Activated B cell treated with CpG ODN at 0.5 μM for 24 hours (primary cell): ENCODE measurements at regions of chr1 and their contacts with region 1.

Region 1: GRCh38 chr1:117059678-117060440 is at the start of gene TTF2:
- DNase-seq: peak; percentile 80
- ATAC-seq: peak; percentile 97
- H3K4me3 Mint-ChIP-seq: no peak within 1 kb of the TSS
- H3K27ac Mint-ChIP-seq: no peak within 1 kb of the TSS
- H3K4me1 Mint-ChIP-seq: peaks cover 26% of the 10 kb centered on the region
- H3K27me3 Mint-ChIP-seq: no peaks in the 10 kb centered on the region
- CTCF ChIP-seq: no peak
- total RNA-seq, gene TTF2: 33.4 and 37.7 TPM in 2 replicates

Region 2: DNA sequence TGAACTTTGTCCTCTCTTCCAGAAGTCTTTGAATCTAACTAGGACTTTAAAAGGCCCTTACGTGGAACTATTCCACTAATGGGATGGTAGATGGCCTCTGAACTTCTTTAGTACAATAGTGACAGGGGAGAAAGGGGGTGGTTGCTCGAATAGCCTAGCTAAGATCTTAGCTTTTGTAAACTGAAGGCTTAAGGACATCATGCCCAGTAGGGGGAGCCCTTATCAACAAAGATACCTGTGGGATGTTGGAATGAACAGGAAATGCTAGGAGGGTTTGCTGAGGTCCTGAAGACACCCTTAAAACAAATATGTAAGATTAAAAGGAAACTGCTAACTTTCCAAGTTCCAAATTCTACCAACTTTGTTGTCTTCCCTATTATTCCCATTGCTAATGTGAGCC is 1252.1 kb before region 1 on chr1:
- CTCF ChIA-PET with region 1: no interaction called
- POLR2A ChIA-PET with region 1: no interaction called
- intact Hi-C with region 1: loop called (anchors 10 kb)
- DNase-seq: no peak
- ATAC-seq: peak; percentile 28
- H3K4me3 Mint-ChIP-seq: no peak overlapping the region
- H3K27ac Mint-ChIP-seq: no peak overlapping the region
- H3K4me1 Mint-ChIP-seq: no peaks in the 10 kb centered on the region
- H3K27me3 Mint-ChIP-seq: peaks cover 9% of the 10 kb centered on the region
- CTCF ChIP-seq: no peak

Region 3: DNA sequence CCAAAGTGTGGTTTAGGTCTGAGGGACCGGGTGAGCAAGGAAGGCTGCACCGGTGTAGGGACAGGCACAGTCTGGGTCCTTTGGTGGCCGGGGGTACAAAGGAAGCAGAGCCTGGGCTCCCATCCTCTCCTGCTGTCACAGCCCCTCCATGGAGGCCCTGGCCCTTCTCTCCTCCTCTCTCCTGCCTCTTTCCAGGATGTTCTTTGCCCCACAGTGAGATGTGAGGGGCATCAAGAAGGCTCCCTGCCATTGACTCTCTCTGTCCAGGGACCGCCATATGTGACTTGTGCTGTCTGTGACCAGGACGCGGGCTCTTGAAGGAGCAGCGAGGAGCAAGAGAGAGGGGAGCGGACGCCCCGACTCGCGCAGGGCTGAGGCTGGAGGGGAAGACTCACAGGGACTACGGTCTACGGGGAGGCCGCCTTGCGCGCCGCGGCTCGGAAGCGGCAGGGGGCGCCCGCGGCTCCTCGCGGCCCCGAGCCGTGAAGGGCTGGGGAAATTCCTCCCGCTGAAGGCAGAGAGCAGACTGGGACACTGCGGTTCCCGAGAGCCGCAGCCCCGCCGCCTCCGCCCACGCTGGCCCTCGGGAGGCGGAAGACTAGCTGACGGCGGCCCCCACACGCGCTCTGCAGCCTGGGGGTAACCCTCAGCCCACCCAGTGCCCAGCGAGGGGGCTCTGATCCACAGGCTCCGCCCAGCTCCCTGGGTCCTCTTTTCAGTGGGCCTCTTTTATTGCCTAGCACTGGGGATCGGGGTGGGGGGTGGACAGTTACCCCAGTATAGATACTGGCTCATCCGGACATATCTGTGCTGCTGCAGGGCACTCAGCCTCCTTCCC is 907.9 kb before region 1 on chr1:
- CTCF ChIA-PET with region 1: no interaction called
- POLR2A ChIA-PET with region 1: no interaction called
- intact Hi-C with region 1: loop called (anchors 5 kb)
- DNase-seq: peak; percentile 76
- ATAC-seq: peak; percentile 98
- H3K4me3 Mint-ChIP-seq: peak overlapping the region; percentile 66
- H3K27ac Mint-ChIP-seq: peak overlapping the region; percentile 19
- H3K4me1 Mint-ChIP-seq: peaks cover 3% of the 10 kb centered on the region
- H3K27me3 Mint-ChIP-seq: peaks cover 4% of the 10 kb centered on the region
- CTCF ChIP-seq: peak; percentile 38

Region 4: DNA sequence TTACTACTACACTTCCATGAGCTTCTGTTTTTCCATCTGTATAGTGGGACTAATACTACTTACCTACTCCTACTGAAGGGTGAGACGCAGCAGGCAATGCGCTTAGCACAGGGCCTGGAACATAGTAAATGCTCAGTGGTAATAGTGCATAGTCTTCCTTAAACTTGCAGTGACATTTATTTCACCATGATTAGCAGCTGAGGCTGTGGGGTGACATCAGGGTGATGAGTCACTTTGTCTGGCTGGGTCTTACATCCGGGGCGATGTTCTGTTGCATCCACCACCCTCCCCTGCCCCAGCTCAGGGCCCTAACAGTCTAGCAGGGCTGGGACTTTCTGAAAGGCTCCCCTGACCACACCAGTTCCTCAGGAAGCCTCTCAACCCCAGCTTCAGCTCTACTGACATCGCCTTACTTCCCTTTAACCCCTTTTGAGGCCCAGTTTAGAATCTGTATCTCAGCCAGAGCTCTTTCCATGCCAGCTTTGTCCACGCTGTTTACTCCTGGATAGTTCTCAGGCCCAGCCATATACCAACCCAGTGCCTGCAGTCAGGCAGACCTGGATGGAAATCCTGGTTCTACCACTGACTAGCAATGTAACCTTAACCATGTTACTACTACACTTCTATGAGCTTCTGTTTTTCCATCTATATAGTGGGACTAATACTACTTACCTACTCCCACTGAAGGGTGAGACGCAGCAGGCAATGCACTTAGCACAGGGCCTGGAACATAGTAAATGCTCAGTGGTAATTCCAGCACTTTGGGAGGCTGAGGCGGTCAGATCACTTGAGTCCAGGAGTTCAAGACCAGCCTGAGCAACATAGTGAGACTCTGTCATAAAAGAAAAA is 555.3 kb before region 1 on chr1:
- CTCF ChIA-PET with region 1: no interaction called
- POLR2A ChIA-PET with region 1: interaction called, 3 read pairs
- intact Hi-C with region 1: loop called (anchors 2 kb)
- DNase-seq: peak; percentile 64
- ATAC-seq: peak; percentile 95
- H3K4me3 Mint-ChIP-seq: peak overlapping the region; percentile 53
- H3K27ac Mint-ChIP-seq: peak overlapping the region; percentile 83
- H3K4me1 Mint-ChIP-seq: peaks cover 63% of the 10 kb centered on the region
- H3K27me3 Mint-ChIP-seq: no peaks in the 10 kb centered on the region
- CTCF ChIP-seq: no peak

Region 5: DNA sequence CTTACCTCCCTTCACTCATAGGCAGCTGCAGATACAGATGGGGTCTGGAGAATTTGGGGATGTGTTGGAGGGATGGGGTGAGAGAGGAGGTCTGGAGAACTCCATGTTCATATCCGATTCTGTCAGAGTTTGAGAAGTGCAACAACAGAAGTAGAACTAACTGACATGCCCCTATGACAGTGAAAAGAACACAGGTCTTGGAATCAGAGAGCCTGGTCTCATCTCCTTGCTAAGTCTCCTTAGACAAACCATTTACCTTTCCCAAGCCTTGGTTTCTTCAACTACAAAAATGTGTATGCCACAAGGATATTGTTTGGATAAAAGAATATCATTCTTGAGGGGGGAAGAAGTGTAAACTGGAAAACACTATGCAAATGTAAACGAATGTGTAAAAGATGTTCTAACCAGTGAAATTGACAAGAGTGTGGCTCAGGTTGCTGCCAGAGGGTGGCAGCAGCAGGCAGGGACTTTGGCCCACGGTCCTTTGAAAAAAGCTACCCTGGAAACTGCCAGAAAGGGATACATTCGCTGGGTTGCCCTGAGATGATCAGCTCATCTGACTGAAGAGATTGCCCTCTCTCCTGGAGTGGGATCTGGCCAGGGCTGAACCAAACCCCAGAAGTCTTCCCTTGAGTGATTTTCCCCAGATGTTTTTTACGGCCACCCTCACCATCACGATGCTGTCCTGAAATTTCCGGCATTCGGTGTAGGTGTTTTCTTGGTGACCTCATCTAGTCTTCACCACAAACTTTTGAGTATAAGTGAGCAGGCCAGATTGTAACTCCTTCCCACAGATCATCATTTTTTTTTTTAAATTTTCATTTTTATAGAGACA is 322.6 kb before region 1 on chr1:
- CTCF ChIA-PET with region 1: interaction called, 36 read pairs
- POLR2A ChIA-PET with region 1: interaction called, 9 read pairs
- intact Hi-C with region 1: loop called (anchors 1 kb)
- DNase-seq: peak; percentile 34
- ATAC-seq: peak; percentile 70
- H3K4me3 Mint-ChIP-seq: peak overlapping the region; percentile 45
- H3K27ac Mint-ChIP-seq: peak overlapping the region; percentile 4
- H3K4me1 Mint-ChIP-seq: peaks cover 25% of the 10 kb centered on the region
- H3K27me3 Mint-ChIP-seq: no peaks in the 10 kb centered on the region
- CTCF ChIP-seq: peak; percentile 45

Region 6: DNA sequence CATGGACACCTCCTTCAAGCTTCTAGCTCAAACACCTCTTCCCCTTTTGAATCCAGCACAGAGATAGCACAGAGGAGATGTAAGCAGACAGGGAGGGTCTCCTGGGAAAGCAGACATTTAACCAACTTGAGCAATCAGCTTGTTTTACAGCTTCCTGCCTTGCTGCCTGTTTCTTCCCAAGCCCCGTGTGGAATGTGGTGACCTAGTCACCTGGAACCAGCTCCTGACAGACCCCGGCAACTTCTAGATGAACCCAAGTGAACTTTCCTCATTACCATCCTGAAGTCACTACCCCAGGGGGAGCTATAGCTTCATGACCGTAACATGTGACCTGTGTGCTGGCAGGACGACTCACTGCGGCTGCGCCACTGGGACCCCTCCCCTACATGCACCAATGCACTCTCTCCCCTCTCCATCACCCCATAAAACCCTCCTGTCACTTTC is 23.8 kb before region 1 on chr1:
- CTCF ChIA-PET with region 1: no interaction called
- POLR2A ChIA-PET with region 1: no interaction called
- intact Hi-C with region 1: no loop called
- DNase-seq: no peak
- ATAC-seq: no peak
- H3K4me3 Mint-ChIP-seq: no peak overlapping the region
- H3K27ac Mint-ChIP-seq: no peak overlapping the region
- H3K4me1 Mint-ChIP-seq: no peaks in the 10 kb centered on the region
- H3K27me3 Mint-ChIP-seq: no peaks in the 10 kb centered on the region
- CTCF ChIP-seq: no peak

Region 7: GRCh38 chr1:117367047-117368018 is 307.5 kb after region 1 on chr1 and contains the start of gene MAN1A2:
- CTCF ChIA-PET with region 1: no interaction called
- POLR2A ChIA-PET with region 1: interaction called, 5 read pairs
- intact Hi-C with region 1: loop called (anchors 1 kb)
- DNase-seq: peak; percentile 82
- ATAC-seq: peak; percentile 72
- H3K4me3 Mint-ChIP-seq: peak within 1 kb of the TSS; percentile 95
- H3K27ac Mint-ChIP-seq: peak within 1 kb of the TSS; percentile 91
- H3K4me1 Mint-ChIP-seq: peaks cover 68% of the 10 kb centered on the region
- H3K27me3 Mint-ChIP-seq: no peaks in the 10 kb centered on the region
- CTCF ChIP-seq: no peak
- total RNA-seq, gene MAN1A2: 43.3 and 46.0 TPM in 2 replicates

Region 8: DNA sequence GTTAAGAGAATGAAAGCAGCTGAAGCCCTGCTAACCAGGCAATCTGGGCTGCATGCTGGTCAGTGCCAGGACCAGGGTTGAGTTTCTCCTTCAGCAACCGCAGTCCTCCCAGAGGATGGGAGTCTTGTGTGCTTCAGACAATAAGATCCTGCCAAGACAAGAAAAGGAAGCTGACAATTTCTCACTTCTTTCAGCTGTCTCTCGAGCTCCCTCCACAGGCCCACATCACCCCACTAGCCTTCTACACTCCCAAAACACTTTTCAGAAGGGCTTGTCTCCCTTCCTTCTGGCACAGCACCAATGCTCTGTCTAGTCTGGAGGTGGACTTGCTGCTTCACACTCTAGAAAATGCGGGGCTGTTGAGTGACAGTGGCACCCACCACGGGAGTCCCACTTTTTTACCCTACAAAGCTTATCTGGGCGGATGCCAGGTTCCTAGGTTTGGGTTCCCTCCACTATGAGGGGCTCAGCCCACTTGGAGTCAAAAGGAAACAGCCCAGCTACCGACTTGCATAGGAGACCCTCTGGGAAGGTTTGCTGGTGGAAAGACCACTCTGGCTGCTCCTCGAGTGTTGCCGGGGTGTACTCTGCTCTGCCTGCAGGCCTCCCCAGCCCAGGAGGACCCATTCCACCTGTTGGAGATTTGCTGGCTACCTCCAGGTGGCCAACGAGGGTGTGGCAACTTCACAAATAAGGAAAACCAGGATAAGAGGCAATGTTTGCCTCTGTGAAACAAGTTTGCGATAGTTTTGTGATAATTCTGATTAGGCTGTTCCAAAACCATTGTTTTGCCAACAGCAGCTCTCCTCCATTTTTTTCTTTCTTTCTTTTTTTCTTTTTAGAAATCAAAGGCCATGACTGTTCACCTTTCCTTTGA is 614.9 kb after region 1 on chr1:
- CTCF ChIA-PET with region 1: no interaction called
- POLR2A ChIA-PET with region 1: no interaction called
- intact Hi-C with region 1: loop called (anchors 5 kb)
- DNase-seq: peak; percentile 41
- ATAC-seq: peak; percentile 80
- H3K4me3 Mint-ChIP-seq: no peak overlapping the region
- H3K27ac Mint-ChIP-seq: no peak overlapping the region
- H3K4me1 Mint-ChIP-seq: peaks cover 56% of the 10 kb centered on the region
- H3K27me3 Mint-ChIP-seq: no peaks in the 10 kb centered on the region
- CTCF ChIP-seq: no peak